CD4-positive, alpha-beta memory T cell (primary cell): ENCODE measurements at regions of chr12 and their contacts with region 1.

Region 1: GRCh38 chr12:94133964-94134795 is 14.2 kb upstream of the PLXNC1 start:
- DNase-seq: peak in 4 of 5 donors; percentile 49 to 59 (median 56)
- H3K4me3 ChIP-seq: no peak overlapping the region
- H3K4me3 Mint-ChIP-seq: no peak overlapping the region
- H3K27ac ChIP-seq: no peak overlapping the region
- H3K27ac Mint-ChIP-seq: no peak overlapping the region
- H3K4me1 ChIP-seq: peaks cover 3% of the 10 kb centered on the region
- H3K4me1 Mint-ChIP-seq: peaks cover 2 to 7% (median 3%) of the 10 kb centered on the region in 4 donors
- H3K27me3 ChIP-seq: no peaks in the 10 kb centered on the region
- H3K27me3 Mint-ChIP-seq: peaks cover 0 to 4% of the 10 kb centered on the region in 2 donors

Region 2: GRCh38 chr12:94262228-94263010 is 128.2 kb after region 1 on chr12:
- CTCF ChIA-PET with region 1: interaction called, 6 read pairs
- POLR2A ChIA-PET with region 1: interaction called, 3 read pairs
- intact Hi-C with region 1: loop called (anchors 5 kb)
- DNase-seq: peak; percentile 71 to 82 (median 76)
- H3K4me3 ChIP-seq: peak overlapping the region; percentile 40 to 84
- H3K4me3 Mint-ChIP-seq: peak overlapping the region; percentile 95 to 98 (median 97)
- H3K27ac ChIP-seq: peak overlapping the region; percentile 74
- H3K27ac Mint-ChIP-seq: peak overlapping the region; percentile 97 to 99 (median 99)
- H3K4me1 ChIP-seq: peaks cover 28% of the 10 kb centered on the region
- H3K4me1 Mint-ChIP-seq: peaks cover 19 to 56% (median 33%) of the 10 kb centered on the region in 4 donors
- H3K27me3 ChIP-seq: no peaks in the 10 kb centered on the region
- H3K27me3 Mint-ChIP-seq: no peaks in the 10 kb centered on the region

Region 3: DNA sequence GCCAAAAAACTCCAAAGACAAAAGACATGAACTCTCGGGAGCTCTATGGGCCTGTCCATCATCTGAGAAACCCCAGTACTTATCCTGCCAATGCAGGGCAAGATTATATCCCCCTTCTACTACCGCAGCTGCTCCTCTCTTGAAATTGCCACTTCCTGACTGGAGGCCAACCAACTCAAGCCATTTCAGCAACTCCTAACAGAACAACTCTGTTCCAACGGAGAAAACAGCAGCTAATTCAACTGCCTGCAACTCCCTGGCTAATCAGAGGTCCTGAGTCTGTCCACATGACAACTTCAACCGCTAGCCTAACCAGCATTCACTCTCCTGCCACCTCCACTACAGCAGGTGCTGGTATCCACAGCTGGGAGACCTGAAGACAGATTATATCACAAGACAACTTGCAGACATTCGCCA is 301.3 kb after region 1 on chr12:
- CTCF ChIA-PET with region 1: interaction called, 18 read pairs
- POLR2A ChIA-PET with region 1: no interaction called
- intact Hi-C with region 1: loop called (anchors 1 kb)
- DNase-seq: no peak
- H3K4me3 ChIP-seq: no peak overlapping the region
- H3K4me3 Mint-ChIP-seq: no peak overlapping the region
- H3K27ac ChIP-seq: no peak overlapping the region
- H3K27ac Mint-ChIP-seq: peak overlapping the region in 1 of 7 donors; percentile 29
- H3K4me1 ChIP-seq: no peaks in the 10 kb centered on the region
- H3K4me1 Mint-ChIP-seq: peaks cover 0 to 12% (median 4%) of the 10 kb centered on the region in 4 donors
- H3K27me3 ChIP-seq: no peaks in the 10 kb centered on the region
- H3K27me3 Mint-ChIP-seq: no peaks in the 10 kb centered on the region

Region 4: DNA sequence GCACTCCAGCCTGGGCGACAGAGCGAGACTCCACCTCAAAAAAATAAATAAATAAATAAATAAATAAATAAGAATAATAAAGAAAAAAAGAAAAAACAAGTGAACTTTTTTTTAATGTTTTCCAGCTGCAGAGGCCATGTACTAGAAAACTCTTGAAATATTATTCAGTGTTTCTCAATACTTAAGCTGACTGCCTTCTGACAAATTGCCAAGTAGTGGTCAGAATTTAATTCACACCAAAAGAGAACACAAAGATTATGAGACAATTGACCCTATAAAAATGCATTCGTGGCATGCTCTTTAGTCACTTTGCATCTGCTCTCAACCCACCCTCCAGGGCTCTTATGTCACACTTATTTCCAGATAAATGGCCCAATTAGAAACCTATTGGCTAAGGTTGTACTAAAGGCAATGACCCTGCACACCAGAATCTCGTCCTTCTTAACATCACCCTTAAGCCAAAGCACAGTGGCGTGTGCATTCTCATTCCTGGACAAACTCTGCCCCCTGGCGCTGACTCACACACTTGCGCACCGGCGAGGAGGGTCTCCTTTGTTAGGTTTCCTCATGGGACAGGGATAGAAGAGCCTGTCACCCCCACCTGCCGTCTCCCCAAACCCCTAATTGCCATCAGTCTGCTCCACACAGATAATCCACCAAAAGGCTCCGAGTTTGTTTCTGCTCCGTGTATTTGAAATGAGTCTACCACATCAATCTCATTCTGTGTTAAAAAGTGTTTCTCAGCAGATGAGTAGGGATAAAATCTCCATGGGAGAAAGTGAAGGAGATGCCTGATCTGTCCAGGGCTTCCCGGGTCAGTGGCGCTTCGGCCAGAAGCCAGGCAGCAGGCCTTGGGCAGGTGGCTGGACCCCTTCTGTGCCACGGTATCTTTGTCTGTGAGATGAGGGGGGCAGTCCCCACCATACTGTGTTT is 398.6 kb after region 1 on chr12:
- CTCF ChIA-PET with region 1: interaction called, 39 read pairs
- POLR2A ChIA-PET with region 1: no interaction called
- intact Hi-C with region 1: loop called (anchors 1 kb)
- DNase-seq: peak; percentile 48 to 64 (median 56)
- H3K4me3 ChIP-seq: no peak overlapping the region
- H3K4me3 Mint-ChIP-seq: no peak overlapping the region
- H3K27ac ChIP-seq: no peak overlapping the region
- H3K27ac Mint-ChIP-seq: no peak overlapping the region
- H3K4me1 ChIP-seq: no peaks in the 10 kb centered on the region
- H3K4me1 Mint-ChIP-seq: peaks cover 0 to 5% (median 3%) of the 10 kb centered on the region in 4 donors
- H3K27me3 ChIP-seq: no peaks in the 10 kb centered on the region
- H3K27me3 Mint-ChIP-seq: peaks cover 2 to 18% of the 10 kb centered on the region in 2 donors

Region 5: DNA sequence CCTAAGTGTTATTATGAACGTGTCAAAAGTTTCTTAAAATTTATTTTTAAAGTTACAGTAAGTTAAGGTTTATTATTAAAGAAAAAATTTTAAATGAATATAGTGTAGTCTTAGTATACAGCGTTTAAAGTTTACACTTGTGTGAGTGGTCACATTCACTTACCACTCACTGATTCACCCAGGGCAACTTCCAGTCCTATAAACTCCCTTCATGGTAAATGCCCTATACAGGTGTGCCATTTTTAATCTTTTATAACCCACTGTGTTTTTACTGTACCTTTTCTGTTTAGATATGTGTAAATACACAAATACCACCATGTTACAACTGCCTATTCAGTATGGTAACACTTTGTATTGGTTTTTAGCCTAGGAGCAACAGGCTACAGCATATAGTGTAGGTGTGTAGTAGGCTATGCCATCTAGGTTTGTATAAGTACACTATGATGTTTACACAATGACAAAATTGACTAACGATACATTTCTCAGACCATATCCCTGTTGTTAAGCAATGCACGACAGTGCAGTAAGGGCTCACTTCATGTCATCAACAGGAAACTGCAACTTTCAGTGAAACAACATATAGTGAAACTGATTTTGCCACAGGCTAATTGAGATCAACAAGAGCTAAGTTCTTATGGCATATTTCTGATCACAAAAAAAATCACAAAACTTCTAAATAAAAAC is 628.2 kb after region 1 on chr12:
- CTCF ChIA-PET with region 1: interaction called, 3 read pairs
- POLR2A ChIA-PET with region 1: no interaction called
- intact Hi-C with region 1: loop called (anchors 1 kb)
- DNase-seq: no peak
- H3K4me3 ChIP-seq: no peak overlapping the region
- H3K4me3 Mint-ChIP-seq: no peak overlapping the region
- H3K27ac ChIP-seq: no peak overlapping the region
- H3K27ac Mint-ChIP-seq: no peak overlapping the region
- H3K4me1 ChIP-seq: no peaks in the 10 kb centered on the region
- H3K4me1 Mint-ChIP-seq: peaks cover 0 to 10% (median under 1%) of the 10 kb centered on the region in 4 donors
- H3K27me3 ChIP-seq: no peaks in the 10 kb centered on the region
- H3K27me3 Mint-ChIP-seq: peaks cover 4 to 8% of the 10 kb centered on the region in 2 donors